Activated naive CD4-positive, alpha-beta T cell treated with anti-CD3 and anti-CD28 coated beads for 36 hours (primary cell): ENCODE measurements at regions of chr22 and their contacts with region 1.

Region 1: GRCh38 chr22:35299673-35300497 is at the start of gene TOM1:
- DNase-seq: peak; percentile 96
- H3K4me3 Mint-ChIP-seq: peak within 1 kb of the TSS; percentile 88
- H3K27ac Mint-ChIP-seq: peak within 1 kb of the TSS; percentile 78
- H3K4me1 Mint-ChIP-seq: peaks cover 27% of the 10 kb centered on the region
- H3K27me3 Mint-ChIP-seq: no peaks in the 10 kb centered on the region
- total RNA-seq, gene TOM1: 25.8 to 26.3 TPM

Region 2: DNA sequence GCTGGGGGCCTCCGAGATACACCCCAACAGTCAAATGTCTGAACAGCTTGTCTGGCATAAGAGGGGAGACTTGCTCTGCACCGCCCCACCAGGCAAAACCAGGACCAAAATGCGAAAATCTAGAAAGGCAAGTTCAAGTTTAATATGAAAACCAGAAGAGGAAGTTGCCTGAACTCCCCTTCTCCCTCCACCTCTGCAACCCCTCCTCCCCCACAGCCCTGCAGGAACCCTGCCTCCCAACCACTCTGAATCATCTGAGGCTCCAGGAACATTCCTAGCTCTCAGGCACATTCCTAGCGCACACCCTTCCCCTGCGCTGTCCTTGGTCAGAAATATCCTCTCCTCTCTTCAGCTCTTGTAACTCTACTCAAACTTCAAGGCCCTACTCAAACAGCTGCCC is 197.2 kb before region 1 on chr22:
- CTCF ChIA-PET with region 1: no interaction called
- intact Hi-C with region 1: no loop called
- DNase-seq: no peak
- H3K4me3 Mint-ChIP-seq: no peak overlapping the region
- H3K27ac Mint-ChIP-seq: no peak overlapping the region
- H3K4me1 Mint-ChIP-seq: no peaks in the 10 kb centered on the region
- H3K27me3 Mint-ChIP-seq: peaks cover 7% of the 10 kb centered on the region

Region 3: DNA sequence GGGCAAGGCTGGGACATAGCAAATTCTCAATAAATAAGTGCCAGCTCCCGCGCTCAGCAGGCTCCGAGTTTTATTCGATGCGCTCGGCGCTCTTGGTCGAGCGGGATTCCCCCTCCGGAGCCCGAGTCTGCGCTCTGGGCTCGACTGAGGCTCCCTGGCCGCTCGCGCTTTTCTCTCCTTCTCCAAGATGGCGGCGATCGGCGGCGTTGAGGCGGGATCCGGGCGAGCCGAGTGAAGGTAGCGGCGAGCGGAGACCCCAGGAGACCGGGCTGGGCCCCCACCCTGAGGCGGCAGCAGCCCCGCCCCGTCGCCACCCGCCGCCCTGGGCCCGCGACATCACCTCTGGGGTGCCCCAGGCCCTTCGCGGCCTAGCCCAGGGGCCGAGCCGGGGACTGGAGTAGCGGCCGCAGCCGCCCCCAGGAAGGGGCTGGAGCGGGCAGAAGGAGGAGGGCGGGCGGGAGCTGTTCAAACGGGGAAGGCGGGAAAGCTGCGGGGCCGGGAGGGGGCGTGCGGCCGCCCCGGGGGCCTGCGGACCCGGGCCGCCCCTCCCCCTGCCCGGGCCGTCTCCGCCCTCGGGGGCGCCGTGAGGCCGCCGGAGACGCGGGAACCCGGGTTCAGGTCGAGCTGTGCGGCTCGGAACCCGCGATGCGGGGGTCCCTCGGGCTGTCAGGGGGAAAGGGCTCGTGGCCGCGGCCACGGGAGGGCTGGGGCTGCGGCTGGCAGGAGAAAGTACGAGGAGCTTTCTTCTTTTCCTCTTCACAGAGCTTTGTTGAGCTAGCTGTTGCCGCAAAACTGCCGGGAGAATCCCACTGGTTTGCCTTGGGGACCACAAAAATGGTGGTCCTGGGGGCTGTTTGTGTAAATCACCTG is 42.3 kb before region 1 on chr22 and contains the start of gene HMGXB4:
- CTCF ChIA-PET with region 1: no interaction called
- intact Hi-C with region 1: loop called (anchors 2 kb)
- DNase-seq: peak; percentile 91
- H3K4me3 Mint-ChIP-seq: peak within 1 kb of the TSS; percentile 88
- H3K27ac Mint-ChIP-seq: peak within 1 kb of the TSS; percentile 92
- H3K4me1 Mint-ChIP-seq: peaks cover 27% of the 10 kb centered on the region
- H3K27me3 Mint-ChIP-seq: no peaks in the 10 kb centered on the region
- total RNA-seq, gene HMGXB4: 36.6 to 38.2 TPM

Region 4: DNA sequence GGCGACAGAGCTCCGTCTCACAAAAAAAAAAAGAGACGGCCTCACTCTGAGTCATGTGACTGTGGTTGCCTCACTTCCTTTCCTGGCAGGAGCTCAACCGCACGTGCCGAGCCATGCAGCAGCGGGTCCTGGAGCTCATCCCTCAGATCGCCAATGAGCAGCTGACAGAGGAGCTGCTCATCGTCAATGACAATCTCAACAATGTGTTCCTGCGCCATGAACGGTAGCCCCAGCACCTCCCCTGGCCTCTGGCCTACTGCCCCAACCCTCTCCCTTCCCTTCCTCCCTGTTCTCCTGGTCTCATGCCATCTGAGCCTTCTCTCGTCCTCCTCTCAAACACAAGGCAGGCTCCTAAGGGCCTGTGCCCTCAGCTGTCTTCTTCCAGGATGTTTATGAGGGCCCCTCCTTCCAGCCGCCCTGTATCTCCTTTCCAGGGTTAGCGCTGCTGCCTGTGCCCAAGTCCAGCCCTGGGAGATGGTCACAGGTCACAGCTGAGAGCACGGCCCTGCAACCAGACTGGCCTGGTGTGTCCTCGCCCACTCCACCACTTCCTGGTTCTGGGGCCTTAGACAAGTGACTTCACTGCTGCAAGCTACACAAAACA is 30.5 kb after region 1 on chr22:
- CTCF ChIA-PET with region 1: interaction called, 5 read pairs
- intact Hi-C with region 1: loop called (anchors 2 kb)
- DNase-seq: peak; percentile 88
- H3K4me3 Mint-ChIP-seq: peak overlapping the region; percentile 79
- H3K27ac Mint-ChIP-seq: peak overlapping the region; percentile 91
- H3K4me1 Mint-ChIP-seq: peaks cover 35% of the 10 kb centered on the region
- H3K27me3 Mint-ChIP-seq: no peaks in the 10 kb centered on the region

Region 5: GRCh38 chr22:35399678-35400334 is 99.9 kb after region 1 on chr22 and contains the start of gene MCM5:
- CTCF ChIA-PET with region 1: no interaction called
- intact Hi-C with region 1: loop called (anchors 2 kb)
- DNase-seq: peak; percentile 99
- H3K4me3 Mint-ChIP-seq: peak within 1 kb of the TSS; percentile 94
- H3K27ac Mint-ChIP-seq: peak within 1 kb of the TSS; percentile 97
- H3K4me1 Mint-ChIP-seq: peaks cover 30% of the 10 kb centered on the region
- H3K27me3 Mint-ChIP-seq: no peaks in the 10 kb centered on the region
- total RNA-seq, gene MCM5: 293 to 301 TPM